ENCODE measurements at regions of chr19 and their contacts with region 1.

Region 1: GRCh38 chr19:43526884-43527859 is at the start of gene ETHE1:
- DNase-seq: peak; percentile 87
- ATAC-seq: peak; percentile 70
- H3K4me3 Mint-ChIP-seq: peak within 1 kb of the TSS; percentile 92
- H3K27ac Mint-ChIP-seq: peak within 1 kb of the TSS; percentile 94
- H3K4me1 Mint-ChIP-seq: peaks cover 22% of the 10 kb centered on the region
- H3K27me3 Mint-ChIP-seq: no peaks in the 10 kb centered on the region
- total RNA-seq, gene ETHE1: 68.7 to 78.8 TPM

Region 2: DNA sequence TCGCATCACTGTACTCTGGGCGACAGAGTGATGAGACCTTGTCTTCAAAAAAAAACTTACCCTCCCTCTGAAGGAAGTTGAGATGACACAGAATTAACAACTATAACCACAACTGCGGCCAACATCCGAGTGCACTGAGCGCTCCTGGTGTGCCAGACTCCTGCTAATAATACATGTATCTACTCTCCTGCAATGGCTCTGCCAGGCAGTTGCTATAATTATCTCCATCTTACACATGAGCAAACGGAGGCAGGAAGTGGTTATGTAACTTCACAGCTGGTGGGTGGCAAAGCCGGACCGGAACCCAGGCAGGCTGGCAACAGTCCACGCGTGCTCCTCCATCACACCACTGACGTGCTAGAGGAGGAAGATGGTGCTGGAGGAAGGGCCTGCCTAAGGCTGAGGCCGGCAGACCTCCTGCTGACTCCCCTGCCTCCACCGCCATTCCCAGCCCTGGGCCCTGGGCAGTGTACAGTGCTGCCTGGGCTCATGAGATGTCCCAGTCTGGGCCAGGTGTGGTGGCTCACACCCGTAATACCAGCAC is 35.6 kb after region 1 on chr19:
- CTCF ChIA-PET with region 1: interaction called, 3 read pairs
- POLR2A ChIA-PET with region 1: interaction called, 3 read pairs
- intact Hi-C with region 1: loop called (anchors 1 to 2 kb)
- DNase-seq: peak; percentile 82
- ATAC-seq: peak; percentile 90
- H3K4me3 Mint-ChIP-seq: no peak overlapping the region
- H3K27ac Mint-ChIP-seq: peak overlapping the region; percentile 94
- H3K4me1 Mint-ChIP-seq: peaks cover 46% of the 10 kb centered on the region
- H3K27me3 Mint-ChIP-seq: no peaks in the 10 kb centered on the region